Dendritic cell treated with granulocyte-macrophage colony-stimulating factor and Interleukin-4, amounts not matched to agents 40 ng/mL and 50 ng/mL, for 4 days (primary cell): ENCODE measurements at regions of chr4 and their contacts with region 1.

Region 1: DNA sequence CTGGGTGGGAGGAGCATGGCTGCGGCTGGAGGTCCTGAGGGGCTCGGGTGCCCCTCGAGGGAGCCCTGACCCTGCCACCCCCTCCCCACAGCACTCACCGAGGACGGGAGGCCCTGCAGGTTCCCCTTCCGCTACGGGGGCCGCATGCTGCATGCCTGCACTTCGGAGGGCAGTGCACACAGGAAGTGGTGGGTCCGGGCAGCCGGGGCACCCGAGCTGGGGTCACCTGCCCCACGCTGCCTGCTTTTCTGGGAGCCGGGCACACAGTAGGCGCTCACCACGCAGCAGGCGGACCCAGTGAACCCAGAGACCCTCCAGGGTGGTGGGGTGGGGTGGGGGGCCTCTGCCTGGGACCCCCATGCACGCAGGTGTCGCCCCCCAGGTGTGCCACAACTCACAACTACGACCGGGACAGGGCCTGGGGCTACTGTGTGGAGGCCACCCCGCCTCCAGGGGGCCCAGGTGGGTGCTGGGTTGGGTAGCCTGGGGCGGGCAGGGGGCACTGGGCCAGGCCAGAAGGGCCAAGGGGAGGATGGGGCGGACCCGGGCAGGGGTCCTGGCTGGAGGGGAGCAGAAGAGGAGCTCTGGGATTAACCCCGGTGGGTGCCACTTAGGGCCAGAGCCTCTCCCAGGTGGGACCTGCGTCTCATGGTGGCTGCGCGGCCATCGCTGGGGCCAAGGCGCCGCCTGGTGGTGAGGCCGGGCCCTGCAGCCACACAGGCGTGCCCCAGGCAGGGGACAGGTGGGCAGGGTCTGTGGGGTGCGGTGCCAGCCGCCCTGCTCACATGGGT is 1.4 kb downstream of the HGFAC start:
- H3K4me3 Mint-ChIP-seq: no peak overlapping the region
- H3K27ac Mint-ChIP-seq: no peak overlapping the region
- H3K4me1 Mint-ChIP-seq: peaks cover 18% of the 10 kb centered on the region
- H3K27me3 Mint-ChIP-seq: peaks cover 6% of the 10 kb centered on the region

Region 2: DNA sequence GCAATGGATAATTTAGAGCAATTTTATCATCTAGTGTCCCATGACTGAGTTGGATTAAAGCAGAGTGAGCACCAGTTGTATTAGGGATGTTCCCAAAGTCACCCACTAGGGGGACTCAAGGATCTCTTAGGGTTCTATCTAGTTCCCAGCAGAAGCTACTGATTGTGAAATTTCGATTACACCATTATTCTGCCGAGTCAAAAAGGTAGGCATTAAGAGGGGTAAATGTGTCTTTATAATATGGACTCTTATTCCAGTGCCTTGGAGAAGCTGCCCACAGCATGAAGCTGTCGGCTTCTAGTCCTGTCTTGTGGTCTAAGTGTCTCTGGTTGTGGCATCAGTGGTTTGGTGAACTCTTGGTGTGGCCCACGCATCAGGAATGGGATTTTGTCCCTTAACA is 97.0 kb before region 1 on chr4:
- intact Hi-C with region 1: loop called (anchors 1 kb)
- H3K4me3 Mint-ChIP-seq: no peak overlapping the region
- H3K27ac Mint-ChIP-seq: no peak overlapping the region
- H3K4me1 Mint-ChIP-seq: peaks cover 22% of the 10 kb centered on the region
- H3K27me3 Mint-ChIP-seq: peaks cover 3% of the 10 kb centered on the region